OCI-LY7 (cell line): ENCODE measurements at regions of chr1 and their contacts with region 1.

Region 1: GRCh38 chr1:200015811-200016210 is 11.7 kb upstream of the NR5A2 start:
- DNase-seq: no peak
- H3K4me3 ChIP-seq: no peak overlapping the region
- H3K27ac ChIP-seq: no peak overlapping the region
- H3K4me1 ChIP-seq: no peaks in the 10 kb centered on the region
- CTCF ChIP-seq: no peak

Region 2: DNA sequence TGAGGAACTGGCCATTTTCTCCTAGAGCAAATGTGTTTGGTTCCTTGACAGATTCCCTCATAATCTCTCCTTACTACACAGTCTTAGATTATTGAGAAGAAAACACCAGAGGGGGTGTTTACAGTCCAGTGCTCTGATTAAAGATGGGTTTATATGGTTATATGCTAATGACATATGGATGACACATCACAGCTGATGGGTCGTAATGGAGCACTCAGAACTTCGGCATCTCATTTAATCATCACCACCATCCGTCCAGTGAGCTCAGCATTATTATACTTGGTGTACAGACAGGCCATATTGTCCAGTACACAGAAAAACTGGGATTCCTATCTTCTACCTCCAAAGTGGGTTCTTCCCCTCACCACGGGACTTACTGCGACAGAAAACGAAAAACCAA is 10.6 kb before region 1 on chr1:
- CTCF ChIA-PET with region 1: no interaction called
- POLR2A ChIA-PET with region 1: interaction called, 12 read pairs
- intact Hi-C with region 1: no loop called
- DNase-seq: no peak
- H3K4me3 ChIP-seq: no peak overlapping the region
- H3K27ac ChIP-seq: no peak overlapping the region
- H3K4me1 ChIP-seq: no peaks in the 10 kb centered on the region
- CTCF ChIP-seq: no peak